Activated CD8-positive, alpha-beta memory T cell treated with anti-CD3 and anti-CD28 coated beads, Interleukin-2, amount 10 ng/mL, durations not matched to agents 7 days and 5 days (primary cell): ENCODE measurements at regions of chr19 and their contacts with region 1.

Region 1: DNA sequence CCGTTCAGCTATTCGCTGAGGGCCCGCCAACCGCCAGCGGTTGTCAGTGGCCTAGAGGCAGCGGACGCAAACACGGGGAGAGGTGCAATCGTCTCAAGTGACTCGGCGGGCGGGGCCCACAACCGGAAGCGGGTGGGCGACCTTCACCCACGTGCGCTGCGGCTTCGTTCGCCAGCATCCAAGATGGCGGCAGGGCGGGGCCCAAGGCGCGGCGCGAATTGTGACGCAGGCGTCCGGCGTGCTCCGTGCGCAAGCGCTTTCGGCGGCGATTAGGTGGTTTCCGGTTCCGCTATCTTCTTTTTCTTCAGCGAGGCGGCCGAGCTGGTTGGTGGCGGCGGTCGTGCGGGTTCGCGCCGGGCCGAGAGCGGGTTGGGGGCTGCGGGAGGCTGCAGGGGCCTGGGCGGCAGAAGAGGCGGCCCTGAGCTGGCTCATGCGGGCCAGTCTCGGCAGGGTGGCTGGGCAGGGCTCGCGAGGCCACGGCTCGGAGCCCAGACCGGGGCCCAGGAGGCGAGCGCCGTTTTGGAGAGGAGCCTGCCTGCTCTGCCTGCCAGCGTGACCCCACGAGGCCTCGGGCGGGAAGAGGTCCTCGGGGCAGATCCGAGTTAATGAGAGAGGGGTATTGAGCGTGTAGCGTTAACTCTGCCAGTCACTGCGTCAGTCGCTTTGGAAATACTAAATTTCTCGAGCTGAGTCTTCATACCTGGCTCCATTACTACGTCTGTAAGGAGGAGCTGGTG is at the start of gene UBA52:
- DNase-seq: peak; percentile 99
- ATAC-seq: peak; percentile 93
- H3K4me3 Mint-ChIP-seq: peak within 1 kb of the TSS; percentile 85
- H3K27ac Mint-ChIP-seq: peak within 1 kb of the TSS; percentile 91
- H3K4me1 Mint-ChIP-seq: peaks cover 34% of the 10 kb centered on the region
- H3K27me3 Mint-ChIP-seq: no peaks in the 10 kb centered on the region
- total RNA-seq, gene UBA52: 1,256 to 1,325 TPM

Region 2: DNA sequence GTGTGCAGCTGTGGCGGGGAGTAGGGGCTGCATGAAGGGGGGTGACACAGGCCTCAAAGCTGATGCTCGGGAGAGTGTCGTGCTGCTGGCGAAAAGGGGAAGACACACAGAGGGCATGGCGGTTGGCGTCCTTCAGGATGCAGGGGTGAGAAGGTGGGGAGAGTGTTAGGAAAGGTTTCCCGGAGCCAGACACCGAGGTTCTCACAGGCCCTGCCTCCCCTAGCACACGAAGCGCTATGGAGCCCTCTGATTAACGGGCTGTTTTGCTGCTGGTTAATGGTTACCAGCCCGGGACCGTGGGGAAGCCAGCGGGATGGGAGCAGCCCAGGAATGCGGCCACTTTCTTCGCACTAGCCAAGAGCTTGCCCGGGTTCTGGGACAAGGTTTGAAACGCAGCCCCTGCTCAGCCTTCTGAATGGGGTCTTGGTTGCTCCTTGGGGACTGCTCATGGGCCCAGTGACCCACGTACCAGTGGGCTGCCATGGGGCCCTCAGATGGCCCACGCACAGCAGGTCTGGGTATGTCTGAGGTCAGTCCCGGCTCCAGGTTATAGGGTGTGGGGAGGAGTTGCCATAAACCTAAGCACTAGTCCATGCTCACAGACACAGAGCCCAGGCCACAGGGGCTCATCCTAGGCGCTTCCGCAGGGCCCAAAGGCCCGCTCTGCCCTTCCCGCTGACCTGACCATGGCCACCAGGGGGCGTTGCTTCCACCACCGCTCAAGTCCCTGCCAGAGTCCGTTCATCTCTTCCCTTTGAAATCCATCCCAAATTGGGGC is 102.5 kb before region 1 on chr19:
- CTCF ChIA-PET with region 1: interaction called, 13 read pairs
- DNase-seq: peak; percentile 63
- ATAC-seq: peak; percentile 57
- H3K4me3 Mint-ChIP-seq: no peak overlapping the region
- H3K27ac Mint-ChIP-seq: no peak overlapping the region
- H3K4me1 Mint-ChIP-seq: peaks cover 25% of the 10 kb centered on the region
- H3K27me3 Mint-ChIP-seq: no peaks in the 10 kb centered on the region

Region 3: DNA sequence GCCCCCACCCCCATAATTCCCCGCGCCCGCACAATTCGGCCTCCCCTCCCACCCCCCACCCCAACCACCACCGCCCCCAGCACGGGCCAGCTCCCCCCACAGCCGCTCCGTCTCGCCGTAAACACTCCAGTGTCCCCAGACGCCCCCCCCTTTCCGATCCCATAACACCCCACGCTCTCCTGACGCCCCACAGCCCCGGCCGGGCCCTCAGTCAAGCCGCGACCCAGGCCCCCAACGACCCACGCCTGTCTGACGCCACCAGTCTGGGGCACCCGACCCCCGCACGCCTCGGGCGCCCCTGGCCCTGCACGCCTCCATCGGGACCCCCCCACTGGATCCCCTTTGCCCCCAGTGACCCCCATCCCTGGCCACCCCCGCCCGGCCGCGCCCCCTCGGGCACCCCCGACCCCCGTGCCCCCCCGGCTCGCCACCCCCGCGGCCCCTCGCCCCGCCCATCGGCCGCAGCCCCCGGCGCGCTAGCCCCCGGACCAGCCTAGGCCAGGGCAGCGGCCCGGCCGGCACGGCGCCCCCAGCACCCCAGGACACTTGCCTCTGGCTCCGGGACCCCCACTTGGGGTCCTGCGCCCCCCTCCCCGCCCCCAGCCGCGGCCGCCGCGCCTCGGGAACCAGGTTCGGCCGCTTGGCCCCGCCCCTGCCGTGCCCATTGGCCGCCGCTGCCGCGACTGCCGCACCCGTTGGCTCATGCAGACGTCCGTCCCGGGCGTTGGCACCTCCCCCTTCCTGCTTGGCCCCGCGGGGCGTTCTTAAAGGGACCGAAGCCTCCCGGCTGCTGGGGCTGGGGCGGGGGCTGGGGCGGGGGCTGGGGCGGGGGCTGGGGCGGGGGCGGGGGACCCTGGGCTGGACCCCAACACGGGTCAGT is 28.6 kb before region 1 on chr19 and contains the start of gene FKBP8:
- CTCF ChIA-PET with region 1: interaction called, 22 read pairs
- DNase-seq: peak; percentile 97
- ATAC-seq: peak; percentile 97
- H3K4me3 Mint-ChIP-seq: peak within 1 kb of the TSS; percentile 88
- H3K27ac Mint-ChIP-seq: peak within 1 kb of the TSS; percentile 98
- H3K4me1 Mint-ChIP-seq: peaks cover 27% of the 10 kb centered on the region
- H3K27me3 Mint-ChIP-seq: no peaks in the 10 kb centered on the region
- total RNA-seq, gene FKBP8: 220 to 286 TPM

Region 4: DNA sequence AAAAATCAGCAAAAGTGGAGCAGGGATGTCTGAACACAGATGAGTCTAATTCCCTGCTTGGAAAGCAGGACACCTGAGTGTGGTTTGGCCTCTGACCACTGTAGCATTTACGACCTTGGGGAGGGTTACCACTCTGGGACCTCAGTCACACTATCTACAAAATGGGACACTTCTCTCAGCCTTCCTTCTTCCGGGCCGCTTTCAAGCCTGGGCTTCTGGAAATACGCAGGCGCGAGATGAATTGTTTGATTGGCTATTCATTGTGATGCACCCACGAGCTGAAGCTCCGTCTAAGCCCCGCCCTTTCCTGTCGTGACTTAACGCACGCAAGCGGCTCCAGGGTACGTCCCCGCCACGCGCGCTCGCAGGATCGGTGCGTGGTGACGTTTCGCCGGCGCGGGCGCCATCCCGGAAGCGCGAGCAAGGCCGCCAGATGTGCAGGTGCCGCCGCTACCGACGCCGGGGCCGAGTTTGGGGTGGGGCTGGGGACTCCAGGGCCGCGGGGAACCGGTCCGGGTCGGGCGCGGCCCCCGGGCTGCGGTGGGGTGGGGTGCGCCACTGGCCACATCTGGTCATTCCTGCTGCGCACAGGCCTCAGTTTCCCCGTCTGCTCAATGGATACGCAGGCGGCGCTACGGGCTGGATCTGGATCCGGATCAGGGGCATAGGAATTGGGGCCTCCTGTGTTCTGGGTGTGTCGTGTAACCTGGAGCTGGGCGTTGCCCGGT is 14.1 kb before region 1 on chr19 and contains the start of gene KXD1:
- CTCF ChIA-PET with region 1: interaction called, 17 read pairs
- DNase-seq: peak; percentile 100
- ATAC-seq: peak; percentile 99
- H3K4me3 Mint-ChIP-seq: peak within 1 kb of the TSS; percentile 89
- H3K27ac Mint-ChIP-seq: peak within 1 kb of the TSS; percentile 94
- H3K4me1 Mint-ChIP-seq: peaks cover 24% of the 10 kb centered on the region
- H3K27me3 Mint-ChIP-seq: no peaks in the 10 kb centered on the region
- total RNA-seq, gene KXD1: 106 to 113 TPM

Region 5: DNA sequence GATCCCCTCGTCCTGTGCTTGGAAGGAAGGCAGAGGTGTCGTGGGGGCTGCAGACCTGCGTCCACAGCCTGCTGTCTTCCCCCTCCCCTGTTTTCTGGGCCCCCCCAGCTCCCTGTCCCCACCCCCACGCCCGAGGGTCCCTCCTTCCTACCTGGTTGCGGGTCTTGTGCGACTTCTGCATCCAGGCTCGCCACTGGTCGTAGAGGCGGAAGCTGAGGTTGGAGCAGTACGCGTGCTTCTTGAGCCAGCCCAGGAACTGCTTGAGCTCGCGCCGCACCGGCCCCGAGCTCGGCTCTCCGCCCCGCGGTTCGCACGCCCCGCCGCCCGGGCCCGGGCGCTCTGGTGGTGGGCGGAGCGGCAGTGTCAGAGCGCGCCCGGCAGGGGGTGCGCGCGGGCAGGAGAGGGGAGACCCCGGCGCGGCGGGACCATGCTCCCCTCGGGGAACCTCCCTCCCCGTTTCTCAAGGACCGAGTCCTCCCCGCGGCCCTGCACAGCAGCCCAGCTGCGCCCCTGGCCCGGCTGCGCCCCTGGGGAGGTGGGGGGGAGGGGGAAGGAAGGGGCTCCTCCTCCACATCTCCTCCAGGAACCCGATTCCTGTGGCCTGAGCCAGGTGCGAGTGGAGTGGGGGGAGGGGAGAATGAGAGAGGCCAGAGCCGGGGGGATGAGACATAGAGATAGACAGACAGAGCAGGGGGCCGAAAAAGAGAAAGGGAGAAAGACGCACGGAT is 22.5 kb after region 1 on chr19:
- CTCF ChIA-PET with region 1: interaction called, 48 read pairs
- DNase-seq: peak; percentile 71
- ATAC-seq: peak; percentile 72
- H3K4me3 Mint-ChIP-seq: peak overlapping the region; percentile 50
- H3K27ac Mint-ChIP-seq: no peak overlapping the region
- H3K4me1 Mint-ChIP-seq: peaks cover 24% of the 10 kb centered on the region
- H3K27me3 Mint-ChIP-seq: peaks cover 7% of the 10 kb centered on the region